PC-3 (cell line): ENCODE measurements at regions of chr18 and their contacts with region 1.

Region 1: GRCh38 chr18:58223717-58224424 is 179.8 kb downstream of the NEDD4L start:
- DNase-seq: peak; percentile 91
- ATAC-seq: peak; percentile 72
- H3K4me3 ChIP-seq: peak overlapping the region; percentile 93
- H3K27ac ChIP-seq: peak overlapping the region; percentile 86
- H3K4me1 ChIP-seq: peaks cover 54% of the 10 kb centered on the region
- H3K27me3 ChIP-seq: no peaks in the 10 kb centered on the region
- CTCF ChIP-seq: no peak

Region 2: GRCh38 chr18:57910817-57911216 is 313.1 kb before region 1 on chr18:
- CTCF ChIA-PET with region 1: no interaction called
- POLR2A ChIA-PET with region 1: no interaction called
- intact Hi-C with region 1: no loop called
- DNase-seq: peak; percentile 15
- ATAC-seq: no peak
- H3K4me3 ChIP-seq: no peak overlapping the region
- H3K27ac ChIP-seq: no peak overlapping the region
- H3K4me1 ChIP-seq: peaks cover 6% of the 10 kb centered on the region; the same call in 1 of the 2 replicates
- H3K27me3 ChIP-seq: no peaks in the 10 kb centered on the region
- CTCF ChIP-seq: peak; percentile 64

Region 3: GRCh38 chr18:58186258-58186948 is 37.5 kb before region 1 on chr18:
- CTCF ChIA-PET with region 1: no interaction called
- POLR2A ChIA-PET with region 1: interaction called, 12 read pairs
- intact Hi-C with region 1: loop called (anchors 2 kb)
- DNase-seq: peak; percentile 89
- ATAC-seq: peak; percentile 88
- H3K4me3 ChIP-seq: peak overlapping the region; percentile 16; the same call in 1 of the 2 replicates
- H3K27ac ChIP-seq: peak overlapping the region; percentile 80
- H3K4me1 ChIP-seq: peaks cover 56% of the 10 kb centered on the region
- H3K27me3 ChIP-seq: no peaks in the 10 kb centered on the region
- CTCF ChIP-seq: no peak

Region 4: GRCh38 chr18:58257461-58257860 is 33.6 kb after region 1 on chr18:
- CTCF ChIA-PET with region 1: no interaction called
- POLR2A ChIA-PET with region 1: interaction called, 12 read pairs
- intact Hi-C with region 1: no loop called
- DNase-seq: peak; percentile 18
- ATAC-seq: no peak
- H3K4me3 ChIP-seq: no peak overlapping the region
- H3K27ac ChIP-seq: no peak overlapping the region
- H3K4me1 ChIP-seq: peaks cover 36% of the 10 kb centered on the region
- H3K27me3 ChIP-seq: no peaks in the 10 kb centered on the region
- CTCF ChIP-seq: no peak

Region 5: DNA sequence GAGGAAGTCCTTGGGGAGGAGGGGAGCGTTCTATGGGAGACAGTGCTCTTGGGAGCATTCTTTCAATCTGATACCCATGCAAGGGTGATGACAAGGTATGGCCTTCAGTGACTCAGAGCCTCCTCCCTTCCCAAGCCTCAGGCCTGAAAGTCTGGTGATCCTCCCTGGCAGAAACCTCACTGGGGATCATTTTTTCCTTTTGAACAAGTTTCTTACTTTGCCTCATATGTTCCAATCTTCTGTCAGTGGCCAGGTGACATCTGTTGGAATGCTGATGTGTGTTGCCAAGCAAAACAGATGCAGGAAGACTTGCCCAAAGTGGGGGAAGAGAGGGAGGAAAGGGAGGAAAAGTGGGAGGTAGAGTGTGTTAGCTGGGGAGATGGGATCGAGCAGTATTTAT is 45.0 kb after region 1 on chr18:
- CTCF ChIA-PET with region 1: no interaction called
- POLR2A ChIA-PET with region 1: no interaction called
- intact Hi-C with region 1: loop called (anchors 1 kb)
- DNase-seq: peak; percentile 96
- ATAC-seq: peak; percentile 94
- H3K4me3 ChIP-seq: peak overlapping the region; percentile 60
- H3K27ac ChIP-seq: peak overlapping the region; percentile 92
- H3K4me1 ChIP-seq: peaks cover 65% of the 10 kb centered on the region
- H3K27me3 ChIP-seq: no peaks in the 10 kb centered on the region
- CTCF ChIP-seq: no peak

Region 6: DNA sequence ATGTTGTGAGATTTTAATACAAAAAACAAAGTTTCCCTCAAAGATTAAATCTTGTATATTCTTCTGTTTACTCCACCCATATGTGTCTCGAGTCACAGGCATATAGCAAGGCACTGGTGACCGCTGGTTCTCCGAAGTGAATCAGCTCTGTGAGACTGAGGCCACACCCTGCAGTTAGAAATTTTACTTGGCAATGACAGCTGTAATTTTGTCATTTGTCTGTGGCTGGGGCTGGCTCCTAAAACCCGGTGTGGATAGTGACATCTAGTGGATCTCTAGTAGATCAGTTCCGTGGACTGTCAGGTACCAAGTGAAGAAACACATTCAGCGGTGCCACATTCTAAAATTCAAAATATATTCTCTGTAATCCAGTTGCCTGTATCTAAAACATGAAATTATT is 98.1 kb after region 1 on chr18:
- CTCF ChIA-PET with region 1: interaction called, 5 read pairs
- POLR2A ChIA-PET with region 1: interaction called, 9 read pairs
- intact Hi-C with region 1: loop called (anchors 1 kb)
- DNase-seq: peak; percentile 95
- ATAC-seq: peak; percentile 99
- H3K4me3 ChIP-seq: no peak overlapping the region
- H3K27ac ChIP-seq: peak overlapping the region; percentile 63
- H3K4me1 ChIP-seq: peaks cover 11% of the 10 kb centered on the region
- H3K27me3 ChIP-seq: no peaks in the 10 kb centered on the region
- CTCF ChIP-seq: peak; percentile 76

Region 7: GRCh38 chr18:58649966-58650816 is 426.3 kb after region 1 on chr18:
- CTCF ChIA-PET with region 1: no interaction called
- POLR2A ChIA-PET with region 1: no interaction called
- intact Hi-C with region 1: no loop called
- DNase-seq: no peak
- ATAC-seq: no peak
- H3K4me3 ChIP-seq: no peak overlapping the region
- H3K27ac ChIP-seq: no peak overlapping the region
- H3K4me1 ChIP-seq: no peaks in the 10 kb centered on the region
- H3K27me3 ChIP-seq: no peaks in the 10 kb centered on the region
- CTCF ChIP-seq: no peak